ENCODE measurements at regions of chr2 and their contacts with region 1.

Region 1: GRCh38 chr2:37389989-37390765 is 45.7 kb downstream of the QPCT start:
- DNase-seq: no peak
- ATAC-seq: no peak

Region 2: GRCh38 chr2:37375741-37376288 is 14.4 kb before region 1 on chr2:
- intact Hi-C with region 1: no loop called
- DNase-seq: no peak
- ATAC-seq: no peak

Region 3: GRCh38 chr2:37767956-37768925 is 378.1 kb after region 1 on chr2:
- intact Hi-C with region 1: no loop called
- DNase-seq: no peak
- ATAC-seq: peak; percentile 81

Region 4: GRCh38 chr2:37890893-37891495 is 500.8 kb after region 1 on chr2:
- intact Hi-C with region 1: loop called (anchors 5 kb)
- DNase-seq: peak; percentile 81
- ATAC-seq: peak; percentile 84

Measured in Right ventricle myocardium inferior (tissue), 1 donor.